Common myeloid progenitor, CD34-positive (primary cell): ENCODE measurements at regions of chr16 and their contacts with region 1.

Region 1: GRCh38 chr16:15073101-15073500 is 17.2 kb upstream of the NTAN1 start:
- DNase-seq: no peak
- H3K4me3 ChIP-seq: no peak overlapping the region
- H3K27ac ChIP-seq: no peak overlapping the region
- H3K4me1 ChIP-seq: no peaks in the 10 kb centered on the region
- H3K27me3 ChIP-seq: no peaks in the 10 kb centered on the region

Region 2: DNA sequence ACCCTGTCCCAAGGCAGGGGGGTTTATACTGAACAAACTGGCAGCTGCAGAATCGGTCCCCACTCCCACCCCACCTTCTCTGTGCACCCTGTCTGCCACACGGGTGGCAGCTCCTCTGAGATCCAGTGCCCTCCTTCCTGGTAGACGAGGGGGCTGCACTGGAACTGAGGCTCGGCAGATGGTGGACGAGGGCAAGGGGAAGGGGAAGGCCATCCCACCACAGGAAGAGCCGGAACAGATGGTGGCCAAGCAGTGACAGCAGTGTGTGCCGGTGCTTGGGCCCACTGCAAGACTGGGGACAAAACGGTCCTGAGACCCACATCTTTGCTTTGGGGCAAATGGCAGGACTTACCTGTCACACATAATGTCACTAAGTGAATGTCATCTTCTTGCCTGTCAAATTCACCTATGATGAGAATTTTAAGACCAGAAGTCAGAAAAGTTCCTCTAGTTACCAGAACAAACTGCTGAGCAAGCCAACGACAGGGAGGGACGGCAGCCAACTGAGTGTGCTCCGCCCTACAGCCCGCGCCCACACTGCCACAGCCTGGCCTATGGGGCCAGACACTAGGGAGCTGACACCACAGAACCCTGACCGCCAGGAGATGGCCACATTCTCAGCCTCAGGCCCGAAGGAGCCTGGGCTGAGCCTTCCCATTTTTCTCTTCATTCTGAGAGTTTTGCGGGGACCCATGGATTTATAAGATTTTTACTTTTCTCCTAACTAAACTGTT is 31.7 kb before region 1 on chr16:
- CTCF ChIA-PET with region 1: no interaction called
- POLR2A ChIA-PET with region 1: no interaction called
- DNase-seq: peak; percentile 43 to 67 (median 54)
- H3K4me3 ChIP-seq: peak overlapping the region in 1 of 7 experiments; percentile 0
- H3K27ac ChIP-seq: peak overlapping the region in 1 of 2 experiments; percentile 11
- H3K4me1 ChIP-seq: peaks cover 0 to 10% (median 6%) of the 10 kb centered on the region in 4 experiments
- H3K27me3 ChIP-seq: no peaks in the 10 kb centered on the region

Region 3: GRCh38 chr16:15057611-15058417 is 15.3 kb before region 1 on chr16:
- CTCF ChIA-PET with region 1: interaction called, 10 read pairs
- POLR2A ChIA-PET with region 1: interaction called, 5 read pairs
- DNase-seq: no peak
- H3K4me3 ChIP-seq: no peak overlapping the region
- H3K27ac ChIP-seq: no peak overlapping the region
- H3K4me1 ChIP-seq: peaks cover 0 to 15% (median 11%) of the 10 kb centered on the region in 4 experiments
- H3K27me3 ChIP-seq: no peaks in the 10 kb centered on the region

Region 4: DNA sequence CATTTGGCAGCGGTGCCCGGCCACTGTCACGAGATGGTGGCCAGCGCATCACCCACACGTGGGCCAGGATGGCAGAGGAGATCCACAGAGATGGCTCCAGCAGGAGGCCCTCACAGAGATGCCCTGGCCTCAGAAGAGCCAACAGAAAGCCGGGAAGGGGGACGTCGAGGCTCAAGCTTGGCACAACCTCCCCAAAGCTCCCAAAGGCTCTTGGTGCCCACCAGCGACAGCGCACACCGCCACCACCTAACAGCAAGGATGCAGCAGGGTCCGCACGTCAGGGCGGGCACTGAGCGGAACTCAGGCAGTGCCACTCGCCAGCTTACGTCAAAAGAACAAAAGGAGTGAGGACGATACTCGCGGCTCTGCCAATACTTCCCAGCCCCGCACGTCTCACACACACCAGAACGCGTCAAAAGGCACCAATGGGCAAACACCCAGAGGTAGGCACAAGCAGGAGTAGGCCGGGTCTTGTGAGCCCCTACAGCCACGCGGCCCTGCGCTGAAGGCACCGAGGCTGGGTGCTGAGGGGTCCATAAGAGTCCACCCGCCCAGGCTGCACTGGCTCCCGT is 73.1 kb after region 1 on chr16:
- CTCF ChIA-PET with region 1: no interaction called
- POLR2A ChIA-PET with region 1: no interaction called
- DNase-seq: no peak
- H3K4me3 ChIP-seq: no peak overlapping the region
- H3K27ac ChIP-seq: no peak overlapping the region
- H3K4me1 ChIP-seq: peaks cover 0 to 33% (median 16%) of the 10 kb centered on the region in 4 experiments
- H3K27me3 ChIP-seq: no peaks in the 10 kb centered on the region